GM12878 (cell line): ENCODE measurements at regions of chr19 and their contacts with region 1.

Region 1: GRCh38 chr19:4267101-4267900 is 11.8 kb upstream of the SHD start:
- DNase-seq: no peak
- ATAC-seq: peak; percentile 92
- H3K4me3 ChIP-seq: no peak overlapping the region
- H3K27ac ChIP-seq: no peak overlapping the region
- H3K4me1 ChIP-seq: no peaks in the 10 kb centered on the region; the same call in 1 of the 2 replicates
- H3K27me3 ChIP-seq: no peaks in the 10 kb centered on the region
- CTCF ChIP-seq: peak; percentile 64 to 80 (median 73)
- EP300 ChIP-seq: no peak
- POLR2A ChIP-seq: 0 out of 2 replicates have a peak, but pooled peaks have one; percentile 34
- RAD21 ChIP-seq: peak; percentile 80

Region 2: DNA sequence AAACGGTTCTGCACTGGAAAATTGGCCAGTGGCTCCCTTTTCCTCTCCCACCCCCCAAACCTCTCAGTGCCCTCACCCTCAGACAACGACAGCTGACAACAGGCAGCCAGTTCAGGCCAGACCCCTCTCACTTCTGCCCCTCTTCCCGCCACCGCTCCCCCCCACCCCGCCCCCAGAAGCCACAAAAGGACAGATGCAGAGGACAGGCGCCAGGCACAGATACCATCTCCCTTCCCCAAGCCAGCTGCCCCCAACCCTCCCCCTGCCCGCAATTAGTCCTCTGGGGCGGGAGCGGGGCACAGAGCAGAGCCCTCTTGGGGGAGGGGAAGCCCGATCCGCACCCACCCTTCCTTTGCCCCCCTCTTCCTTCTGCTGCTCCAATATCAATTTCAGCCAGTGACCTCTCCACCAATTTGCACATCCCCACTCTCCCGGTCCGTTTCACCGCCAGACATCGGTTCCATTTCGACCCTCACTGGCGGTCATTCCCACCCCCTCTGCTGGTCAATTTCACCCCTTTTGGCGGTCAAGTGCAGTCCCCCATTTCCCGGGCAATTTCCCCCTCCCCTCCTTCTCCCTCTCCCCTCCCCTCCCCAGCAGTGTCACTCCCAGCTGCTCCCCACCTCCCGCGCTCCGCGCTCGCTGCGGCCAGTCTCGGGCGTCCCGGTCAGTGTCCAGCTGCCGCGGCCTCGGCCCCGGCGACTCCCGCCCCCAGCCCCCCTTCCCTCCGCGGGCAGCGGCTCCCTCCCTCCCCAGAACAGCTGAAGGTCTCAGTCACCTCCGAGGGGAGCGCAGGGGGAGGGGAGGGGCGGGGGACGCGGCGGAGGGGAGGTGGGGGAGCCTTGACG is 11.3 kb after region 1 on chr19 and contains the start of gene SHD:
- CTCF ChIA-PET with region 1: interaction called, 18 read pairs
- POLR2A ChIA-PET with region 1: no interaction called
- RAD21 ChIA-PET with region 1: no interaction called
- SMC1A ChIA-PET with region 1: no interaction called
- in situ Hi-C with region 1: no loop called
- intact Hi-C with region 1: no loop called
- DNase-seq: no peak
- ATAC-seq: no peak
- H3K4me3 ChIP-seq: no peak within 1 kb of the TSS
- H3K27ac ChIP-seq: no peak within 1 kb of the TSS
- H3K4me1 ChIP-seq: no peaks in the 10 kb centered on the region
- H3K27me3 ChIP-seq: no peaks in the 10 kb centered on the region; a peak in 2 of 4 replicates
- CTCF ChIP-seq: no peak
- EP300 ChIP-seq: no peak
- POLR2A ChIP-seq: no peak
- RAD21 ChIP-seq: no peak
- polyA plus RNA-seq, gene SHD: not detected

Region 3: DNA sequence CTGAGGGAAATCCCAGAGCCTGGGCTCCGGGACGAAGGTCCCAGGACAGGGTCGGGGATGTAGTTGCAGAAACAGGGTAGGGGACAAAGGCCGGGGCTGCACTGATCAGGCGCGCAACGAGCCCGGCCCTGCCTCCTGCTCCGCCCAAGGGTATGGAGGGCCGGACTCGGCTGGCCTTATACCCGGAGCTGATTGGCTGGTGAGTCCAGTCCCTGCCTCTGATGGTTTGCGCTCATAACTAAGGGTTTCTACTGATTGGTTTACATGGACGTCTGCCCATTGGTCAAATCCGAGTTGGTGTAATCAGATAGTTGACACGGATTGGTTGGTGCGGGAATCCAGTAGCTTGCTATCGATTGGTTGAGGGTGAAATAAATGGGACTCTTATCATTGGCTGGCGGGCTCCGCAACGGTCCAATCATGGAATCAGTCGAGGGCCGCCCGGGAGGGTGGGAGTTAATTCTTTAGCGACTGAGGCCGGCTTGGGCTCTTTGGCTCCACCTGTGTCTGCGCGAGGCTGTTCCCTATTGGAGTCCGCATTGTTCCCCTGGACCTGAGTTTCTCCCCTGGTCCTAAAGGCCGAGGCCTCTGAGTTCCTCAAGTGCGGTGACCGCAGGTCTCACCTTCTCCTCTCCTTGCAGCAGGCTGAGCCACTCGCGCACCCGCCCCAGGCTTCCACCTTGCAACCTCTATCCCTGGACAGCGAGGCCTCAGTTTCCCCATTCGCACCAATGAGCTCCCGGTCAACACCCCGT is 75.5 kb after region 1 on chr19:
- CTCF ChIA-PET with region 1: interaction called, 19 read pairs
- POLR2A ChIA-PET with region 1: interaction called, 3 read pairs
- RAD21 ChIA-PET with region 1: interaction called, 10 read pairs
- SMC1A ChIA-PET with region 1: interaction called, 3 read pairs
- in situ Hi-C with region 1: no loop called
- intact Hi-C with region 1: no loop called
- DNase-seq: peak; percentile 100
- ATAC-seq: peak; percentile 95
- H3K4me3 ChIP-seq: peak overlapping the region; percentile 86
- H3K27ac ChIP-seq: peak overlapping the region; percentile 82
- H3K4me1 ChIP-seq: peaks cover 12% of the 10 kb centered on the region
- H3K27me3 ChIP-seq: no peaks in the 10 kb centered on the region
- CTCF ChIP-seq: peak; percentile 9 to 18 (median 12); a peak in 2 of 6 replicates
- EP300 ChIP-seq: no peak
- POLR2A ChIP-seq: peak; percentile 92
- RAD21 ChIP-seq: no peak

Region 4: DNA sequence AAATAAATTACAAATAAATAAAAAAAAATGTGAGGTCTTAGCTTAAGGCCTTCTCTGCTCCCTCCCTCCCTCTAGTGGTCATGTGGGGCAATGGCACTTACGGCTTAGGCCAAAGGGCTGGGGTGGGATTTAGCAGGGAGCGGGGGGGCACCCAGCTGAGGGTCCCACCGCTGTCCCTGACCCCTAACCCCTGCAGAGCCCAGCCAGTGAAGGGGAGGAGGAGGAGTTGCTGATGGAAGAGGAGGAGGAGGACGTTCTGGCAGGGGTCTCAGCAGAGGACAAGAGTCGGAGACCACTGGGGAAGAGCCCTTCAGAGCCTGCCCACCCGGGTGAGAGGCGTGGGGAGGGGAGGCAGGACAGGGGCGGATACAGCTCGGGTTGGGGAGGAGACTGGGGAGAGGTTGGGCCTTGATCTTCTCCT is 85.4 kb after region 1 on chr19:
- CTCF ChIA-PET with region 1: interaction called, 78 read pairs
- POLR2A ChIA-PET with region 1: no interaction called
- RAD21 ChIA-PET with region 1: interaction called, 10 read pairs
- SMC1A ChIA-PET with region 1: interaction called, 12 read pairs
- in situ Hi-C with region 1: loop called (anchors 5 kb)
- intact Hi-C with region 1: loop called (anchors 1 kb)
- DNase-seq: no peak
- ATAC-seq: peak; percentile 90
- H3K4me3 ChIP-seq: no peak overlapping the region
- H3K27ac ChIP-seq: no peak overlapping the region
- H3K4me1 ChIP-seq: no peaks in the 10 kb centered on the region
- H3K27me3 ChIP-seq: no peaks in the 10 kb centered on the region
- CTCF ChIP-seq: peak; percentile 57 to 91 (median 69)
- EP300 ChIP-seq: no peak
- POLR2A ChIP-seq: no peak
- RAD21 ChIP-seq: peak; percentile 73

Region 5: DNA sequence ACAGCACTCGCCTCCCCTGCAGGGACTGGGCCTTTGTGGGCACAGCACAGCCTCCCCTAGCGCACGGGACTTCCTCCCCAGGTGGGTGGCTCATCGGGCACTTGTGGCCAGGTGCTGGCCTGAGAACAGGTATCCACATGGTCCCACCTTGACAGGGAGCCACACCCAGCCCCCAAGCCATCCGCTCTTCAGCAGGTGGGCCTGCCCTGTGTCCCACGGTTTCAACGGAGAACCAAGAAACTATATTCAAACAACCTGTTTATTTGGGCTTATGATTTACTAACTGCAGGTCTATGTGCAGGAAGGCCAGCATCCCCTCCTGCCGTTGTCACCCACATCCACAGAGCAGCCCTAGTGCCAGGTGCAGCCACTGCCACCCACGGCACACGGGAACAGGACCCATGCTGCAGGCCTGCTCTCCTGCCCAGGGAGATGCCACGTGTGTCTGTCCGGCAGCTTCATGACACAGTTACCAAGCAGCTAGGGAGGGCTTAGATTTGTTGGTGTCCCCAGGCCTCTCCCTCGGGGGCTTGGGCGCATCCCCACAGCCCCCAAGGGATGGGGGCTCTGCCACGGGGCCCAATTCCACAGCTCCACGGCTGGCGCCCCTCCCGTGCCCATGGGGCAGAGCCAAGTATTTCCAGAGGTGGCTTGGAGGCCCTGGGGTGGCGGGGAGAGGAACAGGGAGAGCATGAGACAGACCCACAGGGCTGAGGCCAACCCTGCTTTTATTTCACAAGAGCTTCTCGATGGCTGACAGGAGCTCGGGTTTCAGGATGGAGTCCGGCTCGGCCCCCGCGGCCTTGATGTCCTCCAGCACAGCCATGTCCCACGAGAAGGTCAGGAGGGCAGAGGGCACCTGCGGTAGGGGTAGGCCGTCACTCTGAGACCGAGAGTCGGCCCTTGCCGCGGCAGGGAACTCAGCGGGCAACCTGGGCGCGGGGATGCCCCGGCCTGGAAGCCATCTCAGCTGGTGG is 177.8 kb after region 1 on chr19:
- CTCF ChIA-PET with region 1: no interaction called
- POLR2A ChIA-PET with region 1: no interaction called
- RAD21 ChIA-PET with region 1: no interaction called
- SMC1A ChIA-PET with region 1: no interaction called
- in situ Hi-C with region 1: no loop called
- intact Hi-C with region 1: no loop called
- DNase-seq: no peak
- ATAC-seq: no peak
- H3K4me3 ChIP-seq: no peak overlapping the region
- H3K27ac ChIP-seq: no peak overlapping the region
- H3K4me1 ChIP-seq: peaks cover 7% of the 10 kb centered on the region
- H3K27me3 ChIP-seq: no peaks in the 10 kb centered on the region
- CTCF ChIP-seq: no peak
- EP300 ChIP-seq: no peak
- POLR2A ChIP-seq: peak; percentile 59
- RAD21 ChIP-seq: no peak

Region 6: DNA sequence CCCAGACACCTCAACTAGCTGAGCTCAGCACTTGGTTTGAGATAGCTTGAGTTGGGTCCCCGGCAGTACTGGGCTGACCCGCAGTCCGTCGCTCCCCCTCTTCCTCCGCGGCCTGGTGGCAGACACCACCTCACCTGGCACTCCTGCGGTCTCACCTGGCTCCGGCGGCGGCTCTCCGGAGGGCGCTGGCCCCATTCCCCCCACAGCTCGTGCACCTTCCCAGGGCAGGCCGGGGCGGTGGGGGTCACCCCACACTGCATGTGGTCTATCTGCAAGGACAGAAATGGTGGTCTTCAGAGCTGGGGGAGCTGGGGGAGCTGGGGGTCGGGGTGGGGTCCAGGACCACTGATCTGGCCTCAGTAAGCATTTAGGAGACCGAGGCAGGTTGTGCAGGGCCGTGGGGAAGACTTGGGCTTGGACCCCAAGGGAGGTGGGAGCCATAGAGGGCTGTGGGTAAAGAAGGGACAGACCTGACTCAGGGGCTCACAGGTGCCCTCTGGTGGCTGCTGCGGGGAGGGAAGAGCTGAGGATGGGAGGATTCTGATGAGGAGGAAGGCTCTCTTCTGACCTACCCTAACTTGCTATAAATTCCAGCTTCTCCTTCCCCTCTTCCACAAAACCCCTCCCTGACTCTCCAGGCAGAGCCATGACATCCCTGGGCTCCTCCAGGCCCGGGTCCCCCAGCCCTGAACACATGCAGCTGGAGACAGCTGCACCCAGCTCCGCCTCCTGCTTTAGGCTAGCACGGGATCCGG is 257.7 kb after region 1 on chr19:
- CTCF ChIA-PET with region 1: interaction called, 38 read pairs
- POLR2A ChIA-PET with region 1: no interaction called
- RAD21 ChIA-PET with region 1: interaction called, 8 read pairs
- SMC1A ChIA-PET with region 1: interaction called, 4 read pairs
- in situ Hi-C with region 1: no loop called
- intact Hi-C with region 1: loop called (anchors 2 kb)
- DNase-seq: no peak
- ATAC-seq: peak; percentile 93
- H3K4me3 ChIP-seq: no peak overlapping the region
- H3K27ac ChIP-seq: no peak overlapping the region
- H3K4me1 ChIP-seq: no peaks in the 10 kb centered on the region
- H3K27me3 ChIP-seq: no peaks in the 10 kb centered on the region
- CTCF ChIP-seq: peak; percentile 65 to 91 (median 77)
- EP300 ChIP-seq: no peak
- POLR2A ChIP-seq: no peak
- RAD21 ChIP-seq: peak; percentile 43